ENCODE measurements at regions of chr9 and their contacts with region 1.

Region 1: GRCh38 chr9:91422758-91423711 is 597 bp downstream of the NFIL3 start:
- DNase-seq: peak; percentile 68 to 84 (median 76)
- ATAC-seq: peak; percentile 14 to 46 (median 26)
- H3K4me3 ChIP-seq: peak overlapping the region; percentile 26 to 68 (median 56)
- H3K27ac ChIP-seq: peak overlapping the region; percentile 82 to 98 (median 92)
- H3K4me1 ChIP-seq: peaks cover 18 to 27% (median 20%) of the 10 kb centered on the region in 3 donors
- H3K27me3 ChIP-seq: no peaks in the 10 kb centered on the region
- CTCF ChIP-seq: peak in 1 of 4 donors; percentile 14

Region 2: DNA sequence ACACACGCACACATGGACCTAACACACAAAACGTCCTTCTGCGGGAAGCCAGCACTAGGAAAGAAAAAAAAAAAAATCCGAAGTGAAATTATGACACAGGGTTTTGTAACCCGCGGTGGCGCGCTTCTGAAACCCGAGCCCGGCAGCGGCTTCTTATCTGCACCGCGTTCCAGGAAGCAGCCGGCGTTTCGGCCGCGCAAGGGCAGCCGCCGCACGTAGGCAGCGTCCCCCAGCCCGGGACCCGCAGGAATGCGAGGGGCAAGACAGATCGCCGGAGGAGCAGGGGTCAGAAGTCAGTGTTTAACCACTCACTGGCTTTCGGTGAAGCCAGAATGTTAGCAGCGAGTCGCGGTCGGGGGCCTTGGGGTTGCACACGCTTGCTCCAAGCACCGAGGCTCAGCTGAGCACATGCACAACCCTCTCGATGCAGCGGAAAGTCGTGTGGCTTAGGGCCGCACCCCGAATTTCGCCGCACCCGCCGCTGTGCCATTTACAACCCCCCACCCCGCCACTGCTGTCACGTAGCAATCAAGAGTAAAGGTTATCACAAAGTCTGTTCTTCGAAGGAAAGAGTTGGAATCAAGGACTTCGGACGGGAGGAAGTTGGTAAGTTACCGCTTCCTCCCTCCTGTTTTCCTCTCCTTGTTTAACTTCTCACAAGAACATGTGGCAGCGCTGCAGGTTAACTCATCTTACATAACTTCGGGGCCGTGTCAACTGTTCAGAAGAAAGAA is 229.2 kb before region 1 on chr9:
- intact Hi-C with region 1: loop called in 1 of 3 experiments (anchors 10 kb)
- DNase-seq: peak; percentile 85 to 93 (median 87)
- ATAC-seq: peak; percentile 72 to 76 (median 74)
- H3K4me3 ChIP-seq: peak overlapping the region; percentile 12 to 45 (median 26)
- H3K27ac ChIP-seq: peak overlapping the region; percentile 92 to 100 (median 100)
- H3K4me1 ChIP-seq: peaks cover 50 to 61% (median 53%) of the 10 kb centered on the region in 3 donors
- H3K27me3 ChIP-seq: no peaks in the 10 kb centered on the region
- CTCF ChIP-seq: no peak